Sciatic nerve (tissue), 2 donors: ENCODE measurements at regions of chr9 and their contacts with region 1.

Region 1: GRCh38 chr9:135085830-135086546 is 1.5 kb upstream of the OLFM1 start:
- DNase-seq: peak; percentile 88
- ATAC-seq: peak; percentile 86

Region 2: GRCh38 chr9:135340143-135340655 is 254.2 kb after region 1 on chr9:
- intact Hi-C with region 1: loop called (anchors 2 kb)
- DNase-seq: peak; percentile 19
- ATAC-seq: no peak

Region 3: DNA sequence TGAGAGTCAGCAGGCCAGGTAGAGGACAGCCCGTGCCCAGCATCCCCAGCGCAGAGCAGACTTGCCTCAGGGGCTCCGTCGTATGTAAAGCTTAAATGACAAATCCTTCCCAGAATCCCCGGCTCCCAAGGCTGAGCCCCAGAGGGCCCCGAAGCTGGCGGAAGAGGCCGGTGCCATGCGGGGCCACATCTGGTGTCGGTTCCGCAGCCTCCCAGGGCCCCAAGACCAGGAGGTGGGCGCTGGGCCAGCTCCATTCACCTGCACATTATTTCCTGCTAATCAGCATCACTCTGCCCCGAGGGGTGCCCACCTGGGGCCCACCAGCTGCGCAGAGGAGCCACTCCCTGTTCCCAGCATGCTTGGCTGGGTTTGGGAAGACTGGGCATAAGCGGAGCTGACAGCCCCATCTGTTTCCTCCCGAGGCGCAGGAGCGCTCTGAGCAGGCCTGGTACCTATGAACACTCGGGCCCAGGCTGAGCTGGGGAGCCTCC is 269.6 kb after region 1 on chr9:
- intact Hi-C with region 1: no loop called
- DNase-seq: no peak
- ATAC-seq: no peak

Region 4: DNA sequence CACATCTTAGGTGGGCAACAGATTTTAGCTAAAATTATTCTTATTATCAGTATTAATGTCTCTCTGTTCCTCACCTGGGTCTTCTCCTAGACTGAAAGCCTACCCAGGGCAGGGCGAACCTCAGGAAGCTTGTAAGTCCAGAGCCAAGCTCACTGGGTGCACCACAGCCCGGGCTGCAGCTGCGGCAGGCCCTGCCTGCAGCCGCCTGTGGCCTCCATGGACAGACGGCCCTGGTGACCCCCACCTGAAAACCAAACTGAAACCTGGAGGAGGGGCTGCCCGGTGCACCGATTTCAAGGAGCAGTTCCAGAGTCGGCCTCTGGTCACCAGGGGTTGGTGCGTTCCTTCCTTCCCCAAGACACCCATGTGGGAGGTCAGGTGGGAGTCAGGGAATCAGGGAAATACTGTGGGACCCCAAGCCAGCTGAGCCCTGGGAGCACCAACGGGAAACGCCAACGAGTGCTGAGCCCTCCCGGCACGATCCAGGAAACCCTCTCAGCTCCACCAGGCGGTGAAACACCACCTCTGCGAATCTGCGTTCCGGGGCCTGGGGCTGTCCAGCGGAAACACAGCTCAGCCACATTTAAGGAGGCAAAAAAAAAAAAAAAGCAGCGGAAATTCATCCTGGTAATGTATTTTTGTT is 325.0 kb after region 1 on chr9:
- intact Hi-C with region 1: loop called (anchors 5 kb)
- DNase-seq: peak; percentile 42
- ATAC-seq: no peak